Common myeloid progenitor, CD34-positive (primary cell): ENCODE measurements at regions of chr16 and their contacts with region 1.

Region 1: DNA sequence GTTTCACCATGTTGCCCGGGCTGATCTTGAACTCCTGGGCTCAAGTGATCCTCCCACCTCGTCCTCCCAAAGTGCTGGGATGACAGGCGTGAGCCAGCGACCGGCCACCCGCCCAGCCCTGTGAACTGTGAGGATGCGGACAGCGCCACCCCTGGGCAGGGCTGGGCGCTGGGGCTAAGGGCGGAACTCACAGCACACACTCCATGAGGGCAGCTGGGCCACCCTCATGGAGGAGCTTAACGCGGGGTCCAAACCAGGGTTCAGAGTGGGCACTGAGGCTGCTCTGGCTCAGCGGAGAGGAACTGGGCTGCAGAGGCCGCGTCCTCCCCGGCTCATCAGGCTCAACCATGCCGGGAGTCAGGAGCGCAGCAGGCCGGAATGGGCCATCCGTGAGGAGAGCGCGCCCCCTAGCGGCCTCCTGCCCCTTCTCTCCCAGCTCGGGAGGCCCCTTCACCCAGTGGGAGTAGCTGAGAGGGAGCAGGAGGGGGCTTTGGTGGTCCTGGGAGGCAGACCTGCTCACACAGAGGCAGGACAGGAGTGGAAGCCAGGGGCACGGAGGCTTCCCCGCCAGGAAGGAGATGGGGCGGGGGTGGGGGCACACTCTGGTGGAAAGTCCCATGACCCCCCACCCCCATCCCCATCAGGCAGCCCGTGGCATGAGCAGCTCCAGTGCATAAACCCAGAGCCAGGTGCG is 13.8 kb downstream of the CORO7 start:
- DNase-seq: peak; percentile 53 to 74 (median 68)
- H3K4me3 ChIP-seq: no peak overlapping the region
- H3K27ac ChIP-seq: no peak overlapping the region
- H3K4me1 ChIP-seq: no peaks in the 10 kb centered on the region
- H3K27me3 ChIP-seq: no peaks in the 10 kb centered on the region

Region 2: DNA sequence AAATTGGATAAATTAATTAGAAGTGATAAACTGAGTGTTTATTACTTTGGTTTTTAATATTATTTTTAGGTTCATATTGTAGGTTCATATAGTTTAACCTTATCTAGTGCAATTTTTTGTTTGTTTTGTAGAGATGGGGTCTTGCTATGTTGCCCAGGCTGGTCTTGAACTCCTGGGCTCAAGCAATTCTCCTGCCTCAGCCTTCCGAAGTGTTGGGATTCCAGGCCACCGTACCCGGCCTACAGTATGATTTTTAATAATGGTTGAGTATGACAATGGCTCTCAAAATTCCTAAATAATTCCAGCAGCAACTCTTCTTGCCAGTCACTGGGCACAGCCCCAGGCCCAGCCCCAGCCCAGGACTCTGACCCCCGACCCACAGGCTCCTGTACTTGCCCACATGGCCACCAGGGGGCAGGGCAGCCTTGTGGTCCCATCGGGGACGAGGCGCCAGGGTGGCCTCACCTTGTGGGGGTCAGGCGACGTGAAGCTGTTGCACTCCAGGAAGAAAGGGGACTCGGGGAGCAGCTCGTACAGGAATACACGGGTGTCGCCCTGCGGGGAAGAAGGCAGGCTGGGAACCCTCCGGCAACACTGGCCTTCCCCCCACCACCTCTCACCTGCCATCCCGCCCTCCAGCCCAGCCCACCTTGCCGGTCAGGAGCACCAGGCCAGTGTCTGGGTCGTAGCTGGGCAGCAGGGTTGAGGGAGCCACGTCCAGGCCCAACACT is 43.6 kb before region 1 on chr16:
- CTCF ChIA-PET with region 1: interaction called, 31 read pairs
- POLR2A ChIA-PET with region 1: no interaction called
- DNase-seq: peak; percentile 41 to 64 (median 53)
- H3K4me3 ChIP-seq: no peak overlapping the region
- H3K27ac ChIP-seq: no peak overlapping the region
- H3K4me1 ChIP-seq: no peaks in the 10 kb centered on the region
- H3K27me3 ChIP-seq: no peaks in the 10 kb centered on the region

Region 3: DNA sequence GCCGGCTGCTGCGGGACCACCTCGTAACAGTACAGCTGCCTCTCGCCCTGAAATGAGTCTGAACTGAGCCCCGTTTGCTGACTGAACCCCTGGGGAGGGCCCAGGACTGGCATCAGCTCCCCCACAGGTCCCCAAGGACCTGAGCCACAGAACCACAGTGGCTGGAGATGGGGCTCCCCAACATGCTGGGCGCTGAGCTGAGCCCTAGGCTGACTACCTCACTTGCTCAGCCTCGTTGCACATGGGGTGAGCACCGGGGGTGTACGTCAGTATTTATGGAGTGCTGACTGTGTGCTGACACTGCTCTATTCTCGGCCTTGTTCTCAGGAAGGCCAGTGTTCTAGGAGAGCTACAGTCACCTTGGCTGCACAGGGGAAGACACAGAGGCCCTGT is 37.6 kb before region 1 on chr16:
- CTCF ChIA-PET with region 1: interaction called, 31 read pairs
- POLR2A ChIA-PET with region 1: no interaction called
- DNase-seq: no peak
- H3K4me3 ChIP-seq: no peak overlapping the region
- H3K27ac ChIP-seq: no peak overlapping the region
- H3K4me1 ChIP-seq: no peaks in the 10 kb centered on the region
- H3K27me3 ChIP-seq: no peaks in the 10 kb centered on the region

Region 4: GRCh38 chr16:4373863-4374742 is 28.5 kb before region 1 on chr16:
- CTCF ChIA-PET with region 1: interaction called, 10 read pairs
- POLR2A ChIA-PET with region 1: no interaction called
- DNase-seq: peak in 2 of 3 donors; percentile 17 to 35
- H3K4me3 ChIP-seq: no peak overlapping the region
- H3K27ac ChIP-seq: no peak overlapping the region
- H3K4me1 ChIP-seq: peaks cover 0 to 15% (median 12%) of the 10 kb centered on the region in 4 experiments
- H3K27me3 ChIP-seq: peaks cover 0 to 8% (median 0%) of the 10 kb centered on the region in 5 experiments

Region 5: GRCh38 chr16:4416200-4417032 is 13.8 kb after region 1 on chr16 and contains the start of gene CORO7:
- CTCF ChIA-PET with region 1: interaction called, 103 read pairs
- POLR2A ChIA-PET with region 1: interaction called, 10 read pairs
- DNase-seq: peak; percentile 93 to 96 (median 94)
- H3K4me3 ChIP-seq: peak within 1 kb of the TSS; percentile 66 to 87 (median 80)
- H3K27ac ChIP-seq: peak within 1 kb of the TSS; percentile 72 to 88
- H3K4me1 ChIP-seq: peaks cover 5 to 32% (median 27%) of the 10 kb centered on the region in 4 experiments
- H3K27me3 ChIP-seq: no peaks in the 10 kb centered on the region